GM23248 (cell line): ENCODE measurements at regions of chr12 and their contacts with region 1.

Region 1: DNA sequence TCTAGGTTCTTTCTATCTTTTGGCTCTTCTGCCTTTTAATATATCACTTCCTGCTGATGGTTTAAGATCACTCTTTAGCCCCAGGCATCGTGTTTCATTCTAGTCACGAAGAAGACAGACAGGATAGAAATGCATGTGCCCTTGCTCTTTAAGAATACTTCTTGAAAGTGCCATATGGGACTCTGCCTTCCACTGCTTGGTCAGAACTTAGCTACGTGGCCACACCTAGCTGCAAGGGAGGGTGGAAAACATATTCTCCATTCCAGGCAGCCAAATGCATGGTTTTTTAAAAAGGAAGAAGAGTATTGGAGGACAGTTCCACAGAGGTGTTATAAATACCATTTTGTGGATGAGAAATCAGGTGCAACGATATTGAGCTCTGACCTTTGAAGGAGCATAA is 143.3 kb downstream of the KLRB1 start:
- DNase-seq: no peak
- H3K4me3 ChIP-seq: no peak overlapping the region
- H3K27ac ChIP-seq: no peak overlapping the region
- H3K4me1 ChIP-seq: no peaks in the 10 kb centered on the region
- H3K27me3 ChIP-seq: no peaks in the 10 kb centered on the region

Region 2: GRCh38 chr12:9103050-9103849 is 361.2 kb before region 1 on chr12:
- in situ Hi-C with region 1: no loop called
- DNase-seq: no peak
- H3K4me3 ChIP-seq: no peak overlapping the region
- H3K27ac ChIP-seq: no peak overlapping the region
- H3K4me1 ChIP-seq: no peaks in the 10 kb centered on the region
- H3K27me3 ChIP-seq: no peaks in the 10 kb centered on the region

Region 3: GRCh38 chr12:9331218-9331626 is 133.2 kb before region 1 on chr12:
- in situ Hi-C with region 1: loop called (anchors 25 kb)
- DNase-seq: peak; percentile 63
- H3K4me3 ChIP-seq: no peak overlapping the region
- H3K27ac ChIP-seq: no peak overlapping the region
- H3K4me1 ChIP-seq: no peaks in the 10 kb centered on the region
- H3K27me3 ChIP-seq: peaks cover 4% of the 10 kb centered on the region; the same call in 1 of the 2 replicates

Region 4: GRCh38 chr12:9721394-9722092 is 257.1 kb after region 1 on chr12:
- in situ Hi-C with region 1: no loop called
- DNase-seq: peak; percentile 49
- H3K4me3 ChIP-seq: no peak overlapping the region
- H3K27ac ChIP-seq: no peak overlapping the region
- H3K4me1 ChIP-seq: no peaks in the 10 kb centered on the region
- H3K27me3 ChIP-seq: no peaks in the 10 kb centered on the region